GM12878 (cell line): ENCODE measurements at regions of chr5 and their contacts with region 1.

Region 1: DNA sequence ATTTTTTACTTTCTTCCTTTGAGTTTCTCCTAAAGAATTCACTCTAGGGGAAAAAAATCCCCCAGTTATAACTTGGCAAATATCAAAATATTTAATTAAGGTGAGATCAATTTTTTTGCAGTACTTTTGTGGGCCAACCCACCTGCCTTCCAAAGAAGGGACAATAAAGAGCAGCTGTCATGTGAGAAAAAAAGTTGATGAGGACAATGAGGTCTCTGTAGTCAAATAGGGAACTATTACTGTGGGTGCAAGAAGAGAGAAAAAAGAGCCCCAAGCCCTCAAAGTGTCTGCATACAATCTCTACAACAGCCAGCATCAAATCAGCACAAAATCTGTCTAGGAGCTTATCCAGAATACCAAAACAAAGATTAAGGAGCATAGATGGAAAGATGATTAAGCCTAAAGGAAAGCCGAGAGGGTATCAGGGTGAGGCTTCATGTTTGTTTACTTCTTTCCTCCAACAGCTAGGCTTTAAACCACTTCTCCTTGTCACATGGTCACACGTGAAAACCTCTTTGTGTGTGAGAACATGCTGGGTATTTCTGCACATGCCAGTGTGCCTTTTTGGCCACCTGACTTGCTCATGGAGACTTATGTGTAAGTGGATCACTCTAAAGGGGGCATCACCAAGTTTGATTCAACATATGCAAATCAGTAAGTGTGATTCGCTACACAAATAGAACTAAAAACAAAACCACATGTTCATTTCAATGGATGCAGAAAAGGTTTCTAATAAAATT is 19.2 kb upstream of the FYB1 start:
- DNase-seq: peak; percentile 17
- ATAC-seq: no peak
- H3K4me3 ChIP-seq: no peak overlapping the region
- H3K27ac ChIP-seq: no peak overlapping the region
- H3K4me1 ChIP-seq: no peaks in the 10 kb centered on the region
- H3K27me3 ChIP-seq: no peaks in the 10 kb centered on the region
- CTCF ChIP-seq: no peak
- EP300 ChIP-seq: no peak
- POLR2A ChIP-seq: no peak
- RAD21 ChIP-seq: no peak

Region 2: DNA sequence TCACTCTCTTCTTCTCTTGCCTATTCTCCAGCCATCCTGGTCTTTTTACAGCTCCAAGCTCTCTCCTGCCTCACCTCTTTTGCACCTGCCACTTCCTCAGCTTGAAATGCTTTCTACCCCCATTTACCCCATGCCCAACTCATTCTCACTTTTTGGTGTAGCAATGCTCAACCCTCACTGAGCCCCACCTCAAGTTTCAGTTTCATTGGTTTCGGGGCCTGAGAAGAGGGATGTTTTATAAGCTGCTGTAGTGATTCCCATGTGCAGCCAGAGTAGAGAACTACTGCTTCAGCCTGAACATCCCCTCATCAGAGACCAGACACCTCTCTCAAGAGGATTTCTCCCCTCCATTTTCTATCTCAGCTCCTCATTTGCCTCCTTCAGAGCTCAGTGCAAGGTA is 26.0 kb after region 1 on chr5:
- CTCF ChIA-PET with region 1: interaction called, 6 read pairs
- POLR2A ChIA-PET with region 1: no interaction called
- RAD21 ChIA-PET with region 1: interaction called, 14 read pairs
- SMC1A ChIA-PET with region 1: interaction called, 50 read pairs
- in situ Hi-C with region 1: no loop called
- intact Hi-C with region 1: no loop called
- DNase-seq: peak; percentile 69
- ATAC-seq: peak; percentile 96
- H3K4me3 ChIP-seq: no peak overlapping the region
- H3K27ac ChIP-seq: peak overlapping the region; percentile 56
- H3K4me1 ChIP-seq: 0 out of 2 replicates have a peak, but pooled peaks cover 2% of the 10 kb centered on the region
- H3K27me3 ChIP-seq: no peaks in the 10 kb centered on the region
- CTCF ChIP-seq: no peak
- EP300 ChIP-seq: no peak
- POLR2A ChIP-seq: no peak
- RAD21 ChIP-seq: no peak

Region 3: DNA sequence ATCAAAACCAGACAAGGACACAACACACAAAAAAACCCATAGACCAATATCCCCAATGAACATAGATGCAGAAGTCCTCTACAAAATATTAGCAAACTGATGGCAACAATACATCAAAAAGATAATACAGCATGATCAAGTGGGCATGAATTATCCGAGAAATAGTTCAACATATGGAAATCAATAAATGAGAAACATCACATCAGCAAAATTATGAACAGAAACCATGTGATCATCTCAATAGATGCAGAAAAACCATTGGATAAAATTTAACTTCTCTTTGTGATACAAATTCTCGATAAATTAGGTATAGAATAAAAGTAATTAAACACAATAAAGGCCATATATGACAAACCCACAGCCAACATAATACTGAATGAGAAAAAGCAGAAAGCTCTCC is 56.2 kb after region 1 on chr5:
- CTCF ChIA-PET with region 1: no interaction called
- POLR2A ChIA-PET with region 1: no interaction called
- RAD21 ChIA-PET with region 1: no interaction called
- SMC1A ChIA-PET with region 1: no interaction called
- in situ Hi-C with region 1: no loop called
- intact Hi-C with region 1: no loop called
- DNase-seq: no peak
- ATAC-seq: no peak
- H3K4me3 ChIP-seq: no peak overlapping the region
- H3K27ac ChIP-seq: no peak overlapping the region
- H3K4me1 ChIP-seq: no peaks in the 10 kb centered on the region
- H3K27me3 ChIP-seq: no peaks in the 10 kb centered on the region
- CTCF ChIP-seq: no peak
- EP300 ChIP-seq: no peak
- POLR2A ChIP-seq: no peak
- RAD21 ChIP-seq: no peak

Region 4: DNA sequence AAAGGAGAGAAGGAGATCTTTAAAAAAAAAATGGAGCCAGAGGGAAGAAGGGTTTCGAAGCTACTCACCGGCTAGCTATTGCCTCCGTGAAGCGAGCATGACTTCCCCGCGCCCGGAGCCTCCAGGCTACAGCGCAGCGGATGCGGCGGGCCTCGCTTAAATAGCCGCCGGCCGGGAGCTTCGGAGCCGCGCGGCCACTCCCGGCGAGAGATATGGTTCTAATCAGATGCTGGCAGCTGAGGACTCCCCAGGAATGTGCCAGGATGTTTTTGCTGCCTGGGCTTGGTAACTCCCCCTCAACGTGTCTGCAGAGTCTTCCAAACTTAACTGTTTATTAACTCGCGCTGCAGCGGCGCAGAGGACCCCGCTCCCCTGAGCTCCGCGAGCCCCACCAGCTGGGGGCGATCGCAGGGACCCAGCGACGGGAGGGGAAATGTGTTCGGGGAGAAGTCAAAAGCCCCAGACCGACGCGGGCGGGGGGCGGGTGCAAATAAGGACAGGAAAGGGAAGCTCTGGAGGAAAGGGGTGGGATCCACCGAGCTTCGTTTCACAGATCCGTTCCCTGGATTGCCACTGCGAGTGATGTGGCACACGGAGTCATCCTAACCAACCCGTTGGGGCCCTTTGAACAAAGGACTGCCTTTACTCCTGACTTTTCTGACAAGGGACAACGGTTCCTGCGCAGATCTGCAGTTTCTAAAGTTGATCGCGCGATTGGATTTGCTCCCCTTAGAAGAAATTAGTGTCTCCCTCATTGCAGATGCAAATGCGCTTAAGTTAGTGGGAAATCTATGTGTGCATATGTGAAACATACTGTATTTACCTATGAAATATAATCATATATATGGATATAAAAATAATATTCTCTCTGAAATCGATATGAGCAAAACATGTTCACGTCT is 186.5 kb after region 1 on chr5 and contains the start of gene DAB2:
- CTCF ChIA-PET with region 1: no interaction called
- POLR2A ChIA-PET with region 1: no interaction called
- RAD21 ChIA-PET with region 1: no interaction called
- SMC1A ChIA-PET with region 1: no interaction called
- in situ Hi-C with region 1: no loop called
- intact Hi-C with region 1: no loop called
- DNase-seq: no peak
- ATAC-seq: peak; percentile 38; the same call in 2 of the 3 replicates
- H3K4me3 ChIP-seq: no peak within 1 kb of the TSS
- H3K27ac ChIP-seq: no peak within 1 kb of the TSS
- H3K4me1 ChIP-seq: no peaks in the 10 kb centered on the region
- H3K27me3 ChIP-seq: peaks cover 5 to 13% of the 10 kb centered on the region in 2 experiments
- CTCF ChIP-seq: no peak
- EP300 ChIP-seq: no peak
- POLR2A ChIP-seq: no peak
- RAD21 ChIP-seq: no peak
- polyA plus RNA-seq, gene DAB2: not detected